ENCODE measurements at regions of chr16 and their contacts with region 1.

Region 1: GRCh38 chr16:1642148-1642547 is 30.0 kb downstream of the CRAMP1 start:
- DNase-seq: no peak
- ATAC-seq: no peak
- H3K4me3 ChIP-seq: no peak overlapping the region
- H3K27ac ChIP-seq: no peak overlapping the region
- H3K4me1 ChIP-seq: 0 out of 2 replicates have a peak, but pooled peaks cover 5% of the 10 kb centered on the region
- H3K27me3 ChIP-seq: no peaks in the 10 kb centered on the region
- CTCF ChIP-seq: no peak

Region 2: DNA sequence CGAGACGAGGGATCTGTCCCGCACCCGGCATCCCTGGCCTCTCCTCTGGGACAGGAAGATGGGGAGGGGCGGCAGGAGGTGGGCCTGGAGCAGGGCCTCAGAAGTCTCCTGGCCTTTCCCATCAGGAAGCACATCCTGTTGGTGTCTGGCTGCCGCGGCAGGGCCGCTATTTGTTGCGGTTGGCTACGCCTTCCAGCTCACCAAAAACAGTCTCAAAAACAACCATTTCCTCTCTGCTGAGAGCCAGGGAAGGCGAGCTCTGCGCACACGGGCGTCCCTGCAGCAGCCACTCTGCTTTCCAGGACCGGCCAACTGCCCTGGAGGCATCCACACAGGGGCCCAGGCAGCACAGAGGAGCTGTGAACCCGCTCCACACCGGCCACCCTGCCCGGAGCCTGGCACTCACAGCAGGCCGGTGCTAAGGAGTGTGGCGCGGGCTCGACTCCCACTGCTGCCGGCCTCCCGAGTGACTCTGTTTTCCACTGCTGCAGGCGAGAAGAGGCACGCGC is 108.7 kb before region 1 on chr16 and contains the start of gene TMEM204:
- CTCF ChIA-PET with region 1: no interaction called
- POLR2A ChIA-PET with region 1: no interaction called
- in situ Hi-C with region 1: no loop called
- intact Hi-C with region 1: no loop called
- DNase-seq: no peak
- ATAC-seq: no peak; the same call in 1 of the 2 replicates
- H3K4me3 ChIP-seq: no peak within 1 kb of the TSS; a peak in 1 of 4 replicates
- H3K27ac ChIP-seq: no peak within 1 kb of the TSS
- H3K4me1 ChIP-seq: no peaks in the 10 kb centered on the region
- H3K27me3 ChIP-seq: no peaks in the 10 kb centered on the region
- CTCF ChIP-seq: no peak
- total RNA-seq, gene TMEM204: 0.13 TPM

Region 3: DNA sequence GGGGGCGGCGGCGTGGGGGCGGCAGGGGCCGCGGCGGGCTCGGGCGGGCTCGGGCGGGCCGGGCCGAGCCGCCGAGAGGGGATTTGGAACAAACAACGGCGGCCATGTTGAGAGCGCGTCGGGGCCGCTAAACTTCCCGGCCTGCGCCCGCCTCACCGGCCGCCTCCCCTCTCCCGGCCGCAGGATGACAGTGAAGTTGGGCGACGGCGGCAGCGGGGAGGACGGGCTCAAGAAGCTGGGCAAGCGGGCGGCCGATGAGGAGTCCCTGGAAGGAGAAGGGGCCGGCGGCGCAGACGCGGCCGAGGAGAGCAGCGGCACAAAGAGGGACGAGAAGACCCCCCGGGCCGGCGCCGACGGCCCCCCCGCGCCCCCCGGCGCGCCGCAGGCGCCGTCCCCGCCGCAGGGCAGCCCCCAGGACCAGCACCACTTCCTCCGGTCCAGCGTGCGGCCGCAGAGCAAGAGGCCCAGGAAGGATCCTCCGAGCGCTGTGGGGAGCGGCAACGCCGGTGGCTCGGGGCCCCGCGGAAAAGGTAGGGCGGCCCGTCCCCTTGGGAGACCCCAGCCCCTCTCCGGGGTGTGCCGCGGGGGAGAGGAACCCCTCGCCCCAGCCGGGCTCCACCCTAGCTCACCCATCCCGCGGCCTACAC is 27.6 kb before region 1 on chr16:
- CTCF ChIA-PET with region 1: no interaction called
- POLR2A ChIA-PET with region 1: interaction called, 16 read pairs
- in situ Hi-C with region 1: no loop called
- intact Hi-C with region 1: no loop called
- DNase-seq: no peak
- ATAC-seq: no peak
- H3K4me3 ChIP-seq: peak overlapping the region; percentile 54 to 91
- H3K27ac ChIP-seq: peak overlapping the region; percentile 89
- H3K4me1 ChIP-seq: peaks cover 13% of the 10 kb centered on the region
- H3K27me3 ChIP-seq: no peaks in the 10 kb centered on the region
- CTCF ChIP-seq: no peak

Measured in Panc1 (cell line).